WTC11 (cell line): ENCODE measurements at regions of chr13 and their contacts with region 1.

Region 1: DNA sequence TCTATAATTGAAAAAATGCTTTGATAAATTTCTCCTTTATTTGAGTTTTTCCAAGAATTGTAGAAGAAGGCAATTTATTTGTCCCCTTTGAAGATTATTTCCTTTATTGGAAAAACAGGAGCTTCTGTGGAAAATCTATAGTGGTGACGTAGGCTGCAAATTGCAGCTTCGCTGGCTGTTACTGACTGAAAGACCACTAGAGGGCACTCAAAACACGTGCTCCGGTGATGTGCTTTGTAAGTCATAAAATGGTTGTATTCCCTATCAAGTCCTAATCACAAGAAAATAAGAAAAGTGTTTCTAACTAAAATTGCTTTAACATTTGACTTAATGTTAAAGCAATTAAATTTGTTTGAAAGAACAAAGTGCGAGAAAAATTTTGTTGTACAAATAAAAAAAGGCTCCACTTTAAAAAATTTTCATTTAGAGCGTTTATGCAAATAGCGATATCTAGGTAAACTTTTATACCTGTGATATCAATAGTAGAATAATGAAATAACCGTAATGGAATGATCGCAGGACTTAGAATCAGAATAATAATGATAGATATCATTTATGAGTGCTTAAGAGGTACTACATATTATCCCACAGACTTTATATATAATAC is 638.2 kb upstream of the SPRY2 start:
- DNase-seq: peak; percentile 53
- ATAC-seq: peak; percentile 75; the same call in 1 of the 2 replicates
- H3K4me3 Mint-ChIP-seq: no peak overlapping the region
- H3K27ac Mint-ChIP-seq: no peak overlapping the region
- H3K4me1 Mint-ChIP-seq: no peaks in the 10 kb centered on the region
- H3K27me3 Mint-ChIP-seq: no peaks in the 10 kb centered on the region; the same call in 1 of the 2 replicates
- CTCF ChIP-seq: peak; percentile 78

Region 2: GRCh38 chr13:80945328-80945727 is 33.8 kb before region 1 on chr13:
- CTCF ChIA-PET with region 1: no interaction called
- POLR2A ChIA-PET with region 1: no interaction called
- DNase-seq: peak; percentile 49
- ATAC-seq: peak; percentile 100
- H3K4me3 Mint-ChIP-seq: no peak overlapping the region; the same call in 1 of the 2 replicates
- H3K27ac Mint-ChIP-seq: 0 out of 2 replicates have a peak overlapping the region, but pooled peaks have one; percentile 49
- H3K4me1 Mint-ChIP-seq: peaks cover 19% of the 10 kb centered on the region
- H3K27me3 Mint-ChIP-seq: no peaks in the 10 kb centered on the region
- CTCF ChIP-seq: no peak

Region 3: DNA sequence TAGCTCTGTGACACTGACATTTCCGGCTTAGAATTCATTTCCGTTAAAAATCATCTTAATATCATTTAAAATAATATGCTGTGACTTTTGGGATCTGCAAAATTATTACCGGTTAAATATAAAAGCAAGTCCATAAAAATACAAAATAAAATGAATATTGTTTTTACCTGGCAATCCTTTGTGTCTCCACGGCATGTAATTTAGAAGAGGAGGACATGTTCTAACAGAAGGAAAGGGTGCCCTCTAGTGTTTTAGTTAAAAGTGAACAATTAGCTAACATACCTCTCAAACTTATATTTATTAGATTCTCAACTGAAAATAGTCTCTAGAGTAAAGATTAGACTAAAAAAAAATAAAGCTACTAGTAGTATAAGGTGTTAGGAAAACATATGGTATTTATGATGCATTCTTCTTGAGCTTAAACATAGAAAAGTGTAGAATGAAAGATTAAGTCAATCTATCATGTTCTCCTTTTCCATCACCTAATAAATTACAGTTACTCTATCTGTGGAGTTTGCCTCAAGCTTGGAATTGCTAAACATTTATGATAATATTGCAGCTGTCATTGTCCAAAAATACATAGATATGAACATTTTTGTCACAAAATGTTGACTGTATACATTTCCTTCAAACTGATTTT is 38.5 kb after region 1 on chr13:
- CTCF ChIA-PET with region 1: interaction called, 24 read pairs
- POLR2A ChIA-PET with region 1: no interaction called
- DNase-seq: no peak
- ATAC-seq: peak; percentile 65
- H3K4me3 Mint-ChIP-seq: no peak overlapping the region
- H3K27ac Mint-ChIP-seq: no peak overlapping the region
- H3K4me1 Mint-ChIP-seq: no peaks in the 10 kb centered on the region
- H3K27me3 Mint-ChIP-seq: peaks cover 7% of the 10 kb centered on the region
- CTCF ChIP-seq: peak; percentile 30; the same call in 1 of the 2 replicates

Region 4: GRCh38 chr13:81058916-81059290 is 79.8 kb after region 1 on chr13:
- CTCF ChIA-PET with region 1: no interaction called
- POLR2A ChIA-PET with region 1: no interaction called
- DNase-seq: no peak
- ATAC-seq: no peak
- H3K4me3 Mint-ChIP-seq: no peak overlapping the region
- H3K27ac Mint-ChIP-seq: no peak overlapping the region
- H3K4me1 Mint-ChIP-seq: peaks cover 6% of the 10 kb centered on the region
- H3K27me3 Mint-ChIP-seq: no peaks in the 10 kb centered on the region
- CTCF ChIP-seq: no peak